Endothelial cell of umbilical vein (primary cell): ENCODE measurements at regions of chr14 and their contacts with region 1.

Region 1: DNA sequence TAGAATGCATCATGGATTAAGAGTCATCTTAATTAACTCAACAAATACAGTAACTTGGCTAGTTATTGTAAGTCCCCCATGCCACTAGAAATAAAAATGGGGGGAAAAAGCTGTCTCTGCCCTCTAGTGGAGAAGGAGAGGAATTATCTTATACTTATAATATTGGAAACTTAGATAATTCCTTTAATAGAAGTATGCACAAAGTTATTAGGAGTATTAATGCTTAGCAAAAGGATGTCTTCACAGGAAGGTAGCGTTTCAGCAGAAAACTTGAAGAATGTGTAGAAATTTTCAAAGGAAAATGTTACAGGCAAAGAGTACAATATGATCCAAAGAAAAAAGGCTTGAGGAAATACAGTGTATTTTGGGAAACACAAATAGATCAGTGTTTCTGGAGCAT is 19.8 kb downstream of the OR5AU1 start:
- DNase-seq: peak; percentile 21
- H3K4me3 ChIP-seq: no peak overlapping the region
- H3K27ac ChIP-seq: no peak overlapping the region
- H3K4me1 ChIP-seq: no peaks in the 10 kb centered on the region
- H3K27me3 ChIP-seq: no peaks in the 10 kb centered on the region
- CTCF ChIP-seq: peak; percentile 41 to 43
- POLR2A ChIP-seq: no peak

Region 2: DNA sequence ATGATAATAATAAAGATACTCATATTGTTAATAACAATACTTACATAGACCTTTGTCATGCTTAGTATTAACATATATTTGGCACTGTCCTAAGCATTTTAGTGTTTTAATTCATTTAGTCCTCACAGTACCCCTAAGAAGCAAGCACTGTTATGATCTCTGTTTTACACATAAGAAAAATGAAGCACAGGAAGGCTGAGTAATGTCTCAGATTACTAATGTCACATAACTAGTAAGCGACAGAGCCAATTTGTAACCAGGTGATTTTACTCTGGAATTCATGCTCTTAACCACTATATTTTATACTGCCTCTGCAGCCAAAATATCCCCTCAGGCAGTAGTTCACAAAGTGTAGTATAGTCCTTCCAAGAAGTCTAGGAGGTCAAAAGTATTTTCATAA is 14.9 kb before region 1 on chr14:
- CTCF ChIA-PET with region 1: interaction called, 22 read pairs
- POLR2A ChIA-PET with region 1: no interaction called
- dilution Hi-C with region 1: no loop called
- intact Hi-C with region 1: no loop called
- DNase-seq: no peak
- H3K4me3 ChIP-seq: no peak overlapping the region
- H3K27ac ChIP-seq: no peak overlapping the region
- H3K4me1 ChIP-seq: no peaks in the 10 kb centered on the region
- H3K27me3 ChIP-seq: peaks cover 5 to 18% of the 10 kb centered on the region in 2 experiments
- CTCF ChIP-seq: no peak
- POLR2A ChIP-seq: no peak

Region 3: GRCh38 chr14:21476925-21477681 is 341.1 kb after region 1 on chr14 and contains the starts of genes RAB2B and TOX4:
- CTCF ChIA-PET with region 1: no interaction called
- POLR2A ChIA-PET with region 1: no interaction called
- dilution Hi-C with region 1: no loop called
- intact Hi-C with region 1: no loop called
- DNase-seq: peak; percentile 99
- H3K4me3 ChIP-seq: peak within 1 kb of the TSS; percentile 69 to 95 (median 93)
- H3K27ac ChIP-seq: peak within 1 kb of the TSS; percentile 97
- H3K4me1 ChIP-seq: peaks cover 20% of the 10 kb centered on the region
- H3K27me3 ChIP-seq: no peaks in the 10 kb centered on the region
- CTCF ChIP-seq: peak; percentile 91 to 99
- POLR2A ChIP-seq: peak; percentile 15
- total RNA-seq, gene RAB2B: 29.1 and 30.6 TPM in 2 replicates
- total RNA-seq, gene TOX4: 63.2 and 67.4 TPM in 2 replicates